ENCODE measurements at regions of chr3 and their contacts with region 1.

Region 1: GRCh38 chr3:133943639-133944141 is 48.0 kb upstream of the RAB6B start:
- DNase-seq: peak; percentile 71

Region 2: GRCh38 chr3:133979553-133979952 is 35.9 kb after region 1 on chr3:
- intact Hi-C with region 1: loop called (anchors 5 kb)
- DNase-seq: no peak

Region 3: GRCh38 chr3:134029734-134030378 is 86.2 kb after region 1 on chr3 and contains the start of gene SLCO2A1:
- intact Hi-C with region 1: loop called (anchors 5 kb)
- DNase-seq: no peak
- total RNA-seq, gene SLCO2A1: 59.2 TPM